Calu3 (cell line): ENCODE measurements at regions of chr11 and their contacts with region 1.

Region 1: DNA sequence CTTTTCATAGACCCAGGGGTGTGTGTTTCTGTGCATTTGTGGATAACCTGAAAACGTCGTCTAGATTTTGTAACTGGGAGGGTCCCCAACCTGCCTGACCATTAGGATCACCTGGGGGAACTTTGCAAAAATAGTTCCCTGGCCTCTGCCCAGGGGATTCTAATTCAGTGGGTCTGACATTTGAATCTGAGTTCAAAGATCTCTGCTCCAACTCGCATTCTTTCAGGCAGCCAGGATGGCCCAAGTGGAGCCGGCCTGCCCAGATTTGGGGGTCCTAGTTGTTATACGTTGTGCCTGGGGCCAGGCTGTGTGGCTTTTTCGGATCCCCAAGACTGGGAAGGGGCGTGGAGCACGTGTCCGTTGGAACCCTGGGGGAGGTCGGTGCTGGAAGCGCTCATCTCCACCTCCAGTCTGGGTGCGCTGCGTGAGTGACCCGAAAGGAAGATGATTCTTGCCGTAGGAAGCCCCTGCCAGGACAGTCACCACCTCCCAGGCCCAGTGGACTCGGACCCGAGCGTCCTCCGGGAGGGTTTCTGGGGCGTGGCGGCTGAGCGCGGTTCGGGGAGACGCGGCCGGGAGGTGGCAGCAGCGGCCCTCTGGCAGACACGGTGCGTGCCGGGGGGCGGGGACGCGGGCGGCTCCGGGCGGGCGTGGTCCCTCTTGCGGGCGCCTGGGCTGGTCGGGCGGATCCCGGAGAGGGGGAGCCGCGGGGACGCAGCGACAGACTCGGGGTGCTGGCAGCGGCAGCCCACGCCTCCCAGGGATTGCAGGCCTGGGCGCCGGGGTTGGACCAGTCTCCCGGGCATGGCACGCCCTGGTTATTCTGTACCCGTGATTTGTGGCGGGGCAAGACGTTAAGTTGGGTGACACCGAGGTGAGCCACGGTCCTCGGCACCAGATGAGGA is 29.2 kb upstream of the PLET1 start:
- DNase-seq: peak; percentile 84
- H3K4me3 Mint-ChIP-seq: peak overlapping the region; percentile 65
- H3K27ac Mint-ChIP-seq: no peak overlapping the region
- H3K4me1 Mint-ChIP-seq: no peaks in the 10 kb centered on the region
- H3K27me3 Mint-ChIP-seq: no peaks in the 10 kb centered on the region
- CTCF ChIP-seq: peak; percentile 67

Region 2: GRCh38 chr11:112096194-112096593 is 193.6 kb before region 1 on chr11:
- CTCF ChIA-PET with region 1: no interaction called
- intact Hi-C with region 1: no loop called
- DNase-seq: no peak
- H3K4me3 Mint-ChIP-seq: no peak overlapping the region
- H3K27ac Mint-ChIP-seq: no peak overlapping the region
- H3K4me1 Mint-ChIP-seq: no peaks in the 10 kb centered on the region
- H3K27me3 Mint-ChIP-seq: no peaks in the 10 kb centered on the region
- CTCF ChIP-seq: no peak

Region 3: DNA sequence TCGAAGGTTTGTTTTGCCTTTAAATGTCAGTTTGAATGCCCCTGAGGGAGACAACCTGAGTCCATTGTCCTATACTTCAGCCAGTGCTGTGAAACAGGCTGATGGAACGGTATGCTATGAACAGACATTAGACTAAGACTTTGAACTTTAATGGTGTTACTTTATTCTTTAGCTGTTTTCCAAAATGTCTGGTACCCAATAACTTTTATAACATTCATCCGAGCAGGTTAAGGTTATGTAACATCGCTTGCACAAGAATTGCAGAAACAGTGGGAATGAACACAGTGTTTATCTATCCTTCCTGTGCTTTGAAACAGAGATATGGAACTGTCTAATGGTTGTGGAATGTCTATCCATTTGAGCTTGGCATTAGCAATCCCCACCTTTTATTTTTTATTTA is 76.1 kb before region 1 on chr11:
- CTCF ChIA-PET with region 1: no interaction called
- intact Hi-C with region 1: no loop called
- DNase-seq: no peak
- H3K4me3 Mint-ChIP-seq: no peak overlapping the region
- H3K27ac Mint-ChIP-seq: no peak overlapping the region
- H3K4me1 Mint-ChIP-seq: peaks cover 8% of the 10 kb centered on the region
- H3K27me3 Mint-ChIP-seq: no peaks in the 10 kb centered on the region
- CTCF ChIP-seq: no peak

Region 4: DNA sequence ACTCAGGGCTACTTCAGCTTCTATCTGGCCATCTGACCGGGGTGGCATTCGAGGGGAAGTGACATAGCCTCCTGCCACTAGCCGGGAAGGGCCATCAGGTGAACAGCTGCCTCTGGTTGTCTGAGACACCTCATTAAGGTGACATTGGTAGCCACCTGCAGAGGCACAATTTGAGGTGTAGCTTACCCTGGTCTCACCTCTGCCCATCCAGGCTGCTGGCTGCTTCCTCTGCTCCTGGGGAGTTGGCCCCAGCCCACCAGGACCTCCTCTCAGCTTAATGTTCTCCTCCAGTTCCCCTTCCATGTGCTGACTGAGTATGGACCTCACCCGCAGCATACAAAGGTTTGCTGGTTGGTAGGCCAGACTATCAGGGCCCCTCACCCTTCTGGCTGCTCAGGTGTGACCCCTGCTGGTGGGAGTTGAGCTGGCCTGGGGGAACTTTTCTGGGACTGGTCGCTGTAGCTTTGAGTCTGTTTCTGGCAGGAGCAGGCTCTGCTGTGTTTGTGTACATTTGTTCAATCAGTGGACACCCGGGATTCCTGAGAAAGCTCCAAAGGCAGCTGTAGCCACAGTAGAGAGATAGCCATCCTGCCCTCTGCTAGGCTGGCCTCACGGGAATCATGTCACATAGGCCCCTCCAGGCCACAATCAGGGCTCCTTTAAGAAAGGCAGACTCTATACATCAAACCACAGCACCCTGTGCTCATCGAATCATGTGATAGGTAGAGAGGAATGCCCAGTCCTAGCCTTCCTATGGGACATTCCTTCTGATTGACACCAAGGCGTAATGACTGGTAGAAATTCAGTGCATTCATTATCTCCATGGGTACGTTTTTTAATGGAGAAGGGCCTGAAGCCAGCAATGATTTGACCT is 265.9 kb after region 1 on chr11:
- CTCF ChIA-PET with region 1: no interaction called
- intact Hi-C with region 1: loop called (anchors 2 kb)
- DNase-seq: peak; percentile 67
- H3K4me3 Mint-ChIP-seq: no peak overlapping the region
- H3K27ac Mint-ChIP-seq: no peak overlapping the region
- H3K4me1 Mint-ChIP-seq: no peaks in the 10 kb centered on the region
- H3K27me3 Mint-ChIP-seq: peaks cover 33% of the 10 kb centered on the region
- CTCF ChIP-seq: peak; percentile 36

Region 5: GRCh38 chr11:112744041-112744440 is 454.2 kb after region 1 on chr11:
- CTCF ChIA-PET with region 1: no interaction called
- intact Hi-C with region 1: no loop called
- DNase-seq: no peak
- H3K4me3 Mint-ChIP-seq: no peak overlapping the region
- H3K27ac Mint-ChIP-seq: no peak overlapping the region
- H3K4me1 Mint-ChIP-seq: peaks cover 8% of the 10 kb centered on the region
- H3K27me3 Mint-ChIP-seq: peaks cover 32% of the 10 kb centered on the region
- CTCF ChIP-seq: no peak

Region 6: GRCh38 chr11:113113801-113114706 is 824.2 kb after region 1 on chr11:
- CTCF ChIA-PET with region 1: no interaction called
- intact Hi-C with region 1: loop called (anchors 5 kb)
- DNase-seq: peak; percentile 46
- H3K4me3 Mint-ChIP-seq: no peak overlapping the region
- H3K27ac Mint-ChIP-seq: no peak overlapping the region
- H3K4me1 Mint-ChIP-seq: no peaks in the 10 kb centered on the region
- H3K27me3 Mint-ChIP-seq: peaks cover 24% of the 10 kb centered on the region
- CTCF ChIP-seq: peak; percentile 43

Region 7: DNA sequence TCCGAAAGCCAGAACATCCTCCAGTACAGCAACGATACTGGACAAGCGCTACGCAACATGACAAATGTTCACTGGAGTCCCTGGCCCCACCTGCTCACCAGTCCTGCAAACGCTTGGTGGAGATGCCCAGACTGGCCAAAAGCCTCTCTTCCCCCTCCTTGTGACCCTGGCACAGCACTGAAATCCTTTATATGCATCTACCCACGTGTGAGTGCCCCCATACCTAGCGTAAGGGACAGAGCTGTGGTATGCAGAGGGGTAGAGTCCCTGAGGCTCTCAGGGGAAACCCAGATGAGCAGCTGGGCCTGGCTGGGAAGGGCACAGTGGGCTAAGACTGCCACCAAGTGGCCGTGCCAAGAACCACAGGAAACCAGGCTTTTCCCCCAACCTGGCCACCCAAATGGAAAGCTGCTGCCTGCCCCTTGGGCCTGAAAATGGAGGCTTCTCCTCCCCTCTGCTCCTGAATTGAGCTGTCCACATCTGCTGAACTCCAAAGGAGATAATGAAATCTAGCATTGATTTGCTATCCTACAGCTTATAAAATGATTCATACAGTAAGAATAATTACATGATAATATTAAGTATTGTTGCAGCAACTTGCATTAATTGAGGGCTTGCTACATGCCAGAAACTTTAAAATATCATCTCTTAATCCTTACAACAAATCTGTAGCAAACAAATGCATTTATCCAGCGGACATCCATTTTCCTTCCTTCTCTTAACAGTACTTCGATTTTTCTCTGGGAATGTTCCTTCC is 999.8 kb after region 1 on chr11:
- CTCF ChIA-PET with region 1: interaction called, 3 read pairs
- intact Hi-C with region 1: loop called (anchors 5 kb)
- DNase-seq: peak; percentile 59
- H3K4me3 Mint-ChIP-seq: no peak overlapping the region
- H3K27ac Mint-ChIP-seq: no peak overlapping the region
- H3K4me1 Mint-ChIP-seq: peaks cover 9% of the 10 kb centered on the region
- H3K27me3 Mint-ChIP-seq: peaks cover 24% of the 10 kb centered on the region
- CTCF ChIP-seq: peak; percentile 61